Naive thymus-derived CD4-positive, alpha-beta T cell (primary cell): ENCODE measurements at regions of chr9 and their contacts with region 1.

Region 1: DNA sequence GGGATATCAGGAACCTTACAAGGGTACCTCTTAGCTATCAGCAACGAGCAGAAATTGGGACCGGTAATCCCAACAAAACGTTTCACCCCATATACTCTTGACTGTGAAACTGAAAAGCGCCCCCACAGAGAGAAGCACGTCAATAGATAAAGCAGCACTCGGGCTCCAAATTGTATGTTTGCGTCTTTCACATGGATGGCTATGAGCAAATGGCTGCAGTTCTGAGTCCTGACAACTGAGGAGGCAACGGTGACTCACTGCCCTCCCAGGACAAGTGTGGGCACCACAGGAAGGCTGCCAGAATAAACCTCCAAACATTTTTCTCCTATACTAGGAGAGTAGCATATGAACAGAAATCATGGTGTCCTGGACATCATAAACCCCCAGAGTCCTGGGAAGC is 36.6 kb downstream of the SEMA4D start:
- DNase-seq: peak in 1 of 9 donors; percentile 49
- ATAC-seq: no peak
- H3K4me3 ChIP-seq: no peak overlapping the region
- H3K4me3 Mint-ChIP-seq: peak overlapping the region; percentile 36 to 88 (median 60)
- H3K27ac ChIP-seq: peak overlapping the region; percentile 61
- H3K27ac Mint-ChIP-seq: peak overlapping the region; percentile 65 to 99 (median 96)
- H3K4me1 ChIP-seq: peaks cover 85 to 95% of the 10 kb centered on the region in 2 donors
- H3K4me1 Mint-ChIP-seq: peaks cover 79 to 99% (median 96%) of the 10 kb centered on the region in 7 donors
- H3K27me3 ChIP-seq: no peaks in the 10 kb centered on the region
- H3K27me3 Mint-ChIP-seq: no peaks in the 10 kb centered on the region

Region 2: DNA sequence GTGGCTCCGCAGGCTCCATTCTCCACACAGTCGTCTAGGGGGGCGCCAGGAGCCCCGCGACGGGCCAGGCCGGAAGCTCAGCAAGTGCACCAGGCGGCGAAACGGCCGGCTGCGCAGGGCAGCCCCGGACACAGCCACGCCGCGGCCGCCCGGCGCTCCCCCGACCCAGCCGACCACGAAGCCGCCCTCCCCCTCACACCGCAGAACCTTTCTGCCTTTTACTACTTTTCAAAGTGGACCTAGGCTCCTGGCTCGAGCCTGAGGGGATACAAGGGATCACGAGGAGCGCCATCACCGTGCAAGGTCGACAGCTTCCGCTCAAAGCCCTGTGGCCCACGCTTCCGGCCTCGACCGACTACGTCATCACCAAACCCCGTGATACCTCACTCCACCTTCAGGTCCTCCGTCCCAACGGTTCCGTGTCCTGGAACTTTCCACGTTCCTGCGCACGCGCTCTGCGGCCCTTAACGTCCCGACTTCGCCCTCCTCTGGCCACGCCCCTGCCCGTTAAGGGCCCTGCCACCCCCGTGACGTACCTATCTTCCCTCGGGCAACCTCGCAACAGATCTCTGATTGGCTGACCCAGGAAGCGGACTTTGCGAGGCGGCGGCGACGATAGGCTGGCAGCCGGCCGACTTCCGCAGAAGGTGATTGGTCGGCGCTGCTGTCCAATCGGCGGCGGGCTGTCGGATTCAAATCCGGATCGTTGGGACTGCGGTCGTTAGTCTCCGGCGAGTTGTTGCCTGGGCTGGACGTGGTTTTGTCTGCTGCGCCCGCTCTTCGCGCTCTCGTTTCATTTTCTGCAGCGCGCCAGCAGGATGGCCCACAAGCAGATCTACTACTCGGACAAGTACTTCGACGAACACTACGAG is 150.6 kb before region 1 on chr9 and contains the start of gene CKS2:
- CTCF ChIA-PET with region 1: no interaction called
- POLR2A ChIA-PET with region 1: no interaction called
- intact Hi-C with region 1: loop called (anchors 5 kb)
- DNase-seq: peak; percentile 97 to 100 (median 99)
- ATAC-seq: peak; percentile 94
- H3K4me3 ChIP-seq: peak within 1 kb of the TSS; percentile 82
- H3K4me3 Mint-ChIP-seq: peak within 1 kb of the TSS; percentile 94 to 99 (median 96)
- H3K27ac ChIP-seq: peak within 1 kb of the TSS; percentile 96
- H3K27ac Mint-ChIP-seq: peak within 1 kb of the TSS; percentile 97 to 100 (median 99)
- H3K4me1 ChIP-seq: peaks cover 22 to 24% of the 10 kb centered on the region in 2 donors
- H3K4me1 Mint-ChIP-seq: peaks cover 0 to 36% (median 32%) of the 10 kb centered on the region in 7 donors
- H3K27me3 ChIP-seq: peaks cover 0 to 4% of the 10 kb centered on the region in 2 donors
- H3K27me3 Mint-ChIP-seq: peaks cover 0 to 7% (median 0%) of the 10 kb centered on the region in 5 donors
- total RNA-seq, gene CKS2: 5.2 to 121 (median 8.9) TPM

Region 3: DNA sequence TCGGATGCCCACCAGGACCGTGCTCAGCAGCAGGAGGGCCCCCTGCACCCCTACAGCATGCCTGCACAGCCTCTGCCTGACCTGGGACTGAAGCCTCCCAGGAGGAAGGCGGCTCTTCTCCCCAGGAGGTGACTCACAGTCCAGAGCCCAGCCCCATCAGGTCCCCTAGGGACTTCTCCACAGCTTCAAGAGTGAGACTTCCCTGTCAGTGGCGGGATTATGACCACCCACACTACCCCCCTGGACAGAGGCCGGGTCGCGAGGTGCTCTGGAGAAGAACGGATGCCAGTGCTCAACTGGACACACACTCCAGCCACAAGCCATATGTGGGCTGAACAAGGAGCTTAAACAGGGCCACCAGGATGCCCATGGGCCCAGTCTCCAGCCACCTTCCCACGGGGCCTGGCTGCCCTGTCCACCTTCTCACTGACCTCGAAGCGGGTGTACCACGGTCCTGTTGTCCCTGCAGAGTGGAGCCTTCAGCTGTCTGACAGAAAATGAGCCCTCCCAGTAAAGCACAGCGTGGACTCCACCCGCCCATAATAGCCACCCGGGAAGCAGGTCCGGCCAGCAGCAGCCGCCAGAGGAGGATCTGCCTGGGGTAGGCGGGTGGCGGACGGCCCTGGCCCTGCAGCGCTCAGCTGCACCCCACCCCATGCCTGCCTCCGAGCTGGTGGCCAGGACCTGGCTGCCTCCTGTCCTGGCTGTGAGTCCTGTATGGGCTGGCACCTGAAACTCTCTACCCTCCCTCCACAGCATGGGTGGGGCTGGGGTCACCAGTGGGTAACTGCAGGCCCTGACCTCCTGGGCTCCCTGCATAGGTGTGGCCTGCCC is 18.1 kb before region 1 on chr9:
- CTCF ChIA-PET with region 1: interaction called, 3 read pairs
- POLR2A ChIA-PET with region 1: interaction called, 242 read pairs
- intact Hi-C with region 1: loop called in 1 of 2 experiments (anchors 1 kb)
- DNase-seq: no peak
- ATAC-seq: peak; percentile 36
- H3K4me3 ChIP-seq: no peak overlapping the region
- H3K4me3 Mint-ChIP-seq: peak overlapping the region in 3 of 10 donors; percentile 54 to 82 (median 67)
- H3K27ac ChIP-seq: peak overlapping the region; percentile 72
- H3K27ac Mint-ChIP-seq: peak overlapping the region; percentile 76 to 99 (median 96)
- H3K4me1 ChIP-seq: peaks cover 84 to 89% of the 10 kb centered on the region in 2 donors
- H3K4me1 Mint-ChIP-seq: peaks cover 62 to 91% (median 85%) of the 10 kb centered on the region in 7 donors
- H3K27me3 ChIP-seq: no peaks in the 10 kb centered on the region
- H3K27me3 Mint-ChIP-seq: no peaks in the 10 kb centered on the region

Region 4: GRCh38 chr9:89477811-89478630 is 16.8 kb after region 1 on chr9:
- CTCF ChIA-PET with region 1: interaction called, 3 read pairs
- POLR2A ChIA-PET with region 1: interaction called, 242 read pairs
- intact Hi-C with region 1: loop called (anchors 1 to 2 kb)
- DNase-seq: peak in 8 of 9 donors; percentile 49 to 78 (median 66)
- ATAC-seq: peak; percentile 63
- H3K4me3 ChIP-seq: peak overlapping the region; percentile 49
- H3K4me3 Mint-ChIP-seq: peak overlapping the region; percentile 80 to 92 (median 87)
- H3K27ac ChIP-seq: peak overlapping the region; percentile 78
- H3K27ac Mint-ChIP-seq: peak overlapping the region; percentile 90 to 99 (median 95)
- H3K4me1 ChIP-seq: peaks cover 74 to 82% of the 10 kb centered on the region in 2 donors
- H3K4me1 Mint-ChIP-seq: peaks cover 76 to 96% (median 90%) of the 10 kb centered on the region in 7 donors
- H3K27me3 ChIP-seq: no peaks in the 10 kb centered on the region
- H3K27me3 Mint-ChIP-seq: no peaks in the 10 kb centered on the region